MCF 10A (cell line): ENCODE measurements at regions of chr19 and their contacts with region 1.

Region 1: GRCh38 chr19:4342615-4343369 is 570 bp upstream of the MPND start:
- DNase-seq: peak; percentile 100
- H3K4me3 Mint-ChIP-seq: peak overlapping the region; percentile 88
- H3K27ac Mint-ChIP-seq: peak overlapping the region; percentile 42
- H3K4me1 Mint-ChIP-seq: peaks cover 7% of the 10 kb centered on the region
- H3K27me3 Mint-ChIP-seq: no peaks in the 10 kb centered on the region
- CTCF ChIP-seq: no peak

Region 2: DNA sequence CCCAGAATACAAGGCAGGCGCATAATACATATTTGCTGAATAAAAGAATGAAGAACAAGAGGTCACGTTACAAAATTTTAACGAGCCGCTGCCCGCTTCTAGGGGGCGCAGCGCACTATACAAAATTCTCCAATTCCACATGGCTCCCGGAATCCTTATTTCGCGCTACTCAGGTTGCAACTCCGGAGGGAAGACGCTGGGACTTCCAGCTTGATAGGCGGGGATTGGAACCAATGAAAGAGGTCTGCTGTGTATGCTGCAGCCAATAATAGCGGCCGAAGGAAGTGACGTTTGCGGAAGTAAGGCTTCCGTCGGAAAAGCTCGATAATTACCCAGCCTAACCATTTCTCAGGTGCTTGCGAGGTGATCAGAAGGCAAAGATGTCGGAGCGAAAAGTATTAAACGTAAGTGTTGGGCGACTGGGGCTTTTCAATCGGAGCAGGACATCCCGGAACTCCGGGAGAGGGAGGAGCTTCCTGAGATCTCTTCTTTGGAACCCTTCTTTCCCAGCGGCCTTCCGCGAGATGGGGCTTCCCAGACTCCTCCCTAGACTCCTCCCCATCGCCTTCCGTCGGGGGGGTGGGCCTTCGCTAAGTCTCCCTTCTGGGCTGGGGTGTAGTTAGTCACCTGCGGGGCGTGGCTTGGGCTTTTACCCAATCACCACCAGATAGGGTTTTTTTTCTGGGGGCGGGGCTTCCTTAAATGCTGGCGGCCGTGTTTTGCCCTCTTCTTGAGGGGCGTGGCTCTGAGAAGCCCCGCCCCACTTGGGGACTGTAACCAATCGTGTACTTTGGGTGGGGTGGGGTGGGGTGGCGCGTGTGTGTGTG is 95.8 kb before region 1 on chr19 and contains the start of gene YJU2:
- CTCF ChIA-PET with region 1: no interaction called
- POLR2A ChIA-PET with region 1: interaction called, 21 read pairs
- intact Hi-C with region 1: no loop called
- DNase-seq: peak; percentile 100
- H3K4me3 Mint-ChIP-seq: peak within 1 kb of the TSS; percentile 82
- H3K27ac Mint-ChIP-seq: peak within 1 kb of the TSS; percentile 99
- H3K4me1 Mint-ChIP-seq: no peaks in the 10 kb centered on the region
- H3K27me3 Mint-ChIP-seq: no peaks in the 10 kb centered on the region
- CTCF ChIP-seq: peak; percentile 45
- total RNA-seq, gene YJU2: 28.1 and 30.1 TPM in 2 replicates

Region 3: GRCh38 chr19:4328243-4328990 is 14.4 kb before region 1 on chr19:
- CTCF ChIA-PET with region 1: interaction called, 3 read pairs
- POLR2A ChIA-PET with region 1: interaction called, 12 read pairs
- intact Hi-C with region 1: no loop called
- DNase-seq: no peak
- H3K4me3 Mint-ChIP-seq: no peak overlapping the region
- H3K27ac Mint-ChIP-seq: no peak overlapping the region
- H3K4me1 Mint-ChIP-seq: no peaks in the 10 kb centered on the region
- H3K27me3 Mint-ChIP-seq: no peaks in the 10 kb centered on the region
- CTCF ChIP-seq: no peak